Ovary (tissue), 10 donors: ENCODE measurements at regions of chr19 and their contacts with region 1.

Region 1: DNA sequence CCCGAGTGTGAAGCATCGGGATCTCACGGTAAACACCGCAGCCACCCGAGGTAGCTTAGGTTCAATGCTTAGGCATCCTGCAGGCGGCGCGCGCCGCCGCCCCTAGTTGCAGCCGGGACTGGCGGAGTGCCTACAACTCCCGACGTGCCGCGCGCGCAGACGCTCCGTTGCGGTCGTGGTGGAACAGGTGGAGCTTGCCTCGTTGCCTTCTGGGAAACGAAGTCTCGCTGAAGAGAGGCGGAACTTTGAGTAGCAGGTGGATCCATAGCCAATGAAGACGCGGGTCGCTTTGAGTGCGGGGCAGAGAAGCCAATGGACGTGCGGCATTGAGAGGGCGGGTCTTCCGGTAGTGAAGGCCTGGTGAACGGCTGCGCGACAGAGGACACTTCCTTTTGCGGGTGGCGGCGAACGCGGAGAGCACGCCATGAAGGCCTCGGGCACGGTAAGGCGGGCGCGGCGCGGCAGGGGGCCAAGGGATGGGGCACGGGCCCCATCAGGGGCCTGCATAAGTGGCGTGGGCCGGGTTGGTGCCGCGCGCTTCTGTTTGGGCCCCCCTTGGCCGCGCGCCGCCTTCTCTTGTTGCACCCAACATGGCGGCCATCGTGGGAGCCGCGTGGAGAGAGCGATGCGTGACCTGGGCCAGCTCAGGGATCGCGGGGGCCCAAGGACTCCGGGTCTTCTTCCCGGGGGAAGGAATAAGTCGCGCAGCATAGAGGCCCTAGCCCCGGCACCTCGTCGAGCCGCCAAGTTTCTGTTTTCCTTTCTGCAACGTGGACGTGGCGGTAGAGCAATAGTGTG is at the start of gene RPL18A:
- DNase-seq: peak; percentile 98 to 99 (median 98)
- H3K4me3 ChIP-seq: peak within 1 kb of the TSS; percentile 92
- H3K27ac ChIP-seq: peak within 1 kb of the TSS; percentile 79 to 86
- H3K4me1 ChIP-seq: peaks cover 5% of the 10 kb centered on the region
- H3K27me3 ChIP-seq: no peaks in the 10 kb centered on the region
- CTCF ChIP-seq: peak; percentile 63 to 88 (median 78)
- EP300 ChIP-seq: no peak
- POLR2A ChIP-seq: peak; percentile 91
- total RNA-seq, gene RPL18A: 2,762 to 5,071 (median 3,195) TPM

Region 2: DNA sequence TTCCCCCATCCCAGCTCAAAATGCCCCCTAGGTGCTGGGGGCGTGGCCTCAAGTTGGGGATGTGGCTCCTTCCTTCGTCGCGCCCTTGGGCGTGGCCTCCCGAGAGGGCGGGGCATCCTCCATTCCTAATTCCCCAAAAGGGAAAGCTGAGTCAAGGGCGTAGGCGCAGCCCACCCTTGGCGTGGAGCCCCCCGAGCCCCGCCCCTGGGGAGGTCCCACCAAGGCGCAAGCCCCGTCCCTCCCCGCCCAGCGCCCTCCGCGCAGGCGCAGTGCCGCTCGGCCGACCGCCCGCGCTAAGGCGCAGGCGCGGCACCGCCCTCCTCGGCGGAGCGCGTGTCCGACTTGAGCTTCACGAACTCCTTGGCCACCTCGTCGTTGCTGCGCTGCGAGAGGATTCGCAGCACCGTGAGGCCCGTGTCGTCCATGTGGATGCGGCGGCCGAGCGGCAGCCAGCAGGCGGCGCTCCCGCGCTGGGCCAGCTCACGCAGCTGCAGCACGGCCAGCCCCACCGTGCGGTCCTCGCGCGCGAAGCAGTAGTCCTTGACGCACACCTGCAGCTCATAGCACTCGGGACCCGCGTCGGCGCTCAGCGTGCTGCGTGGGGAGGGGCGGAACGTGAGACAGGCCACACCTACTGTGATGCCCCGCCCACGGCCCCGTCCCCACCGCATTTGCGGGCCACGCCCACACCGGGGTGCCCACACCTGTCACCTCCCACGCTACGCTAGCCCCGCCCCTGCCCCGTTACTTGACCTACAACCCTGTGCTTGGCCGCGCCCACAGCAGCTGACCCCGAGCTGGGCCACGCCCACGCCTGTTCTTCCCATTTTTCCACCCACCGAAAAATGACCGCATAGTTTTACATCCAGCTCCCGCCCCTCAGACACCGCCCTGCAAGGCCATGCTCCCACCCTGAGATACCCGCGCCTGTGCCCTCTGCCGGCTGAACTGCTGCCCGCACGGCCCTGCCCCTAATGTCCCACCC is 253.7 kb before region 1 on chr19:
- intact Hi-C with region 1: loop called in 1 of 4 experiments (anchors 10 kb)
- DNase-seq: peak; percentile 86 to 91 (median 87)
- H3K4me3 ChIP-seq: peak overlapping the region; percentile 1
- H3K27ac ChIP-seq: peak overlapping the region; percentile 21 to 60
- H3K4me1 ChIP-seq: peaks cover 7% of the 10 kb centered on the region
- H3K27me3 ChIP-seq: no peaks in the 10 kb centered on the region
- CTCF ChIP-seq: peak; percentile 62 to 98 (median 95)
- EP300 ChIP-seq: no peak
- POLR2A ChIP-seq: no peak

Region 3: GRCh38 chr19:17616961-17617806 is 242.5 kb before region 1 on chr19:
- intact Hi-C with region 1: no loop called
- DNase-seq: no peak
- H3K4me3 ChIP-seq: no peak overlapping the region
- H3K27ac ChIP-seq: no peak overlapping the region
- H3K4me1 ChIP-seq: peaks cover 2% of the 10 kb centered on the region
- H3K27me3 ChIP-seq: no peaks in the 10 kb centered on the region
- CTCF ChIP-seq: no peak
- EP300 ChIP-seq: no peak
- POLR2A ChIP-seq: no peak

Region 4: DNA sequence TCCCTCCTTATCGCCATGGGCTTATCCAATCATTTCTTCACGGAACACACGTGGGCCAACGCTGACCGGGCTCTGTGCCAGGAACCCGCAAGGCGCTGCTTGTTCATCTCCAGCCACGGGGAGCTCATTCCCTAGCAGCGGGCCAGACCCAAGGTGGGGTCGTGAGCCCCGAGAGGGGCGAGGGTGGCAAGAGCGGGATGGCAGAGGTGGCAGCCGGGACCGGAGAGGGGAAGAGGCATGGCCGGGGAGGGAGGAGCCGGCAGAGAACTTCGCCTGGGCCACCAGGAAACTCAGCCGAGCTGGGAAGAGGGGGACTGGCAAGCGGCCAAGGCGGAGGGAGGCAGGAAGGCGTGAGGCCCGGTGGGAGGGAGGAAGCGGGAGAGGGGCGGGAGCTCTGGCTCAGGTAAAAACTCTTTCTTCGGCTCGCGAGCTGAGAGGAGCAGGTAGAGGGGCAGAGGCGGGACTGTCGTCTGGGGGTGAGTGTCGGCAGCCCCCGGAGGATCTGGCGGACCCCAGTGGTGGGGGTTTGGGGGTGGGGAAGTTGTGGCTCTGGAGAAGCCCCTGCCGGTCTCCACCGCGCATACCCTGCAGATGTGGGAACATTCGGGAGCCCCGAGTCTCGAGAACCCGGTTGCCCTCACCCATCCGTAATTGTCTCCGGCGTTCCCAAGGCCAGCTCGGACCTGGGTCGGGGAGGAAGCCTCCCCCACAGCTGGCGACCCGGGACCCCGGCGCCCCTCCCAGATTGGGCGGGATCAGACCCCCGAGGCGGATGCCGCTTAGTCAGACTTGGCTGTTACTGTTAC is 64.8 kb before region 1 on chr19 and contains the start of gene B3GNT3:
- intact Hi-C with region 1: loop called in 1 of 4 experiments (anchors 10 kb)
- DNase-seq: peak in 2 of 5 donors; percentile 33 to 56
- H3K4me3 ChIP-seq: peak within 1 kb of the TSS; percentile 28
- H3K27ac ChIP-seq: no peak within 1 kb of the TSS
- H3K4me1 ChIP-seq: no peaks in the 10 kb centered on the region
- H3K27me3 ChIP-seq: no peaks in the 10 kb centered on the region
- CTCF ChIP-seq: no peak
- EP300 ChIP-seq: no peak
- POLR2A ChIP-seq: no peak
- total RNA-seq, gene B3GNT3: 0.34 to 0.79 (median 0.51) TPM in 5 of 7 donors, not detected in the others

Region 5: DNA sequence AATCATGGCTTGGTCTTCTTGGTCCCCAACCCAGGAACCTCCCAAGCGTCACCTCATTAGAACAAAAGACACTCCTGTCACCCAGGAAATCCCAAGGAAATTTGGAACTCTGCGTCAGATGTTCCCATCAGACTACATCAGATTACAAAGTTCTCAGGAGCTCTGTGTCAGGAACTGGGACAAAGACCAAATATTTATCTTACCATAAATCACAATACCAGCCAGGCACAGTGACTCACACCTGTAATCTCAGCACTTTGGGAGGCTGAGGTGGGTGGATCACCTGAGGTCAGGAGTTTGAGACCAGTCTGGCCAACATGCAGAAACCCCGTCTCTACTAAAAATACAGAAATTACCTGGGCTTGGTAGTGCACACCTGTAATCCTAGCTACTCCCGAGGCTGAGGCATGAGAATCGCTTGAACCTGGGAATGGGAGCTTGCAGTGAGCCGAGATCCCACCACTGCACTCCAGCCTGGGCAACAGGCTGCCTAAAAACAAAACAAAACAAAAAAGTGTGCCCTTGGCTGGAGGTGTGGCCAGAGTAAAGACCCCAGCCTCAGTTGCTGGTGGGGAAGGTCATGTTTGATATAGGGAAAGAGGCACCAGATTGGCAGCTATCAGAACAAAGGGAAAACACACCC is 56.3 kb after region 1 on chr19:
- intact Hi-C with region 1: no loop called
- DNase-seq: no peak
- H3K4me3 ChIP-seq: no peak overlapping the region
- H3K27ac ChIP-seq: no peak overlapping the region
- H3K4me1 ChIP-seq: no peaks in the 10 kb centered on the region
- H3K27me3 ChIP-seq: no peaks in the 10 kb centered on the region
- CTCF ChIP-seq: no peak
- EP300 ChIP-seq: no peak
- POLR2A ChIP-seq: no peak

Region 6: DNA sequence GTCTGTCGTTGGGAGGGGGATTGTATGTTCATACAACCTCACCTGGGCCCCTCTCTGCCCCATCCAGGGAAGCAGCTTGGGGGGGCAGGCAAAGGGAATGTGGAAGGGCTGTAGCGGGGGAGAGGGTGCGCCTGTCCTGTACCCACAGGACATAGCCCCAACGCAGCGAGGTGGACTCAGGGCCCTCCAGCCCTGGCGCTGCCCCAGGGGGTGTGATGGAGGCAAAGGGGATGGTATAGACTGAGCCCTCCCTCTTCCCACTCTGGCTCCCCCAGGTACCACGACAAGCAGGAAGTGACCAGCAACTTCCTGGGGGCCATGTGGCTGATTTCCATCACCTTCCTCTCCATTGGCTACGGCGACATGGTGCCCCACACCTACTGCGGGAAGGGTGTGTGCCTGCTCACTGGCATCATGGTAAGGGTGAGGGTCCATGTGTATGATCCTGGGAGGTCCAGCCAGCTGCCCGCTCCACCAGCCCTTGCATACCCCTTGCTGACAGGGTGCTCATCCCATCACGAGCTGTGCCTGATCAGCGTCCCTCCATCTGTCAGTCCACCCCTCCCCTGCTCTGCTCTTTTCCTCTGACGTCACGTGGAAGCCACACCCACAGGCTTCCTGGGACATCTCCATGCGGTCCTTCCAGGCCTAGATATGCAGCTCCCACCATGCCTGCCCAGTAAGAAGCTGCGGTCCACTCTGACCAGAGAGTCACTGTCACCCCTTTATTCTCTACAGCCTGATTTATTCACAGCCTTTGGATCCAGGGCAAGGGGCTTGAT is 125.5 kb after region 1 on chr19:
- intact Hi-C with region 1: loop called in 2 of 4 experiments (anchors 10 kb)
- DNase-seq: no peak
- H3K4me3 ChIP-seq: no peak overlapping the region
- H3K27ac ChIP-seq: no peak overlapping the region
- H3K4me1 ChIP-seq: no peaks in the 10 kb centered on the region
- H3K27me3 ChIP-seq: no peaks in the 10 kb centered on the region
- CTCF ChIP-seq: no peak
- EP300 ChIP-seq: no peak
- POLR2A ChIP-seq: no peak

Region 7: DNA sequence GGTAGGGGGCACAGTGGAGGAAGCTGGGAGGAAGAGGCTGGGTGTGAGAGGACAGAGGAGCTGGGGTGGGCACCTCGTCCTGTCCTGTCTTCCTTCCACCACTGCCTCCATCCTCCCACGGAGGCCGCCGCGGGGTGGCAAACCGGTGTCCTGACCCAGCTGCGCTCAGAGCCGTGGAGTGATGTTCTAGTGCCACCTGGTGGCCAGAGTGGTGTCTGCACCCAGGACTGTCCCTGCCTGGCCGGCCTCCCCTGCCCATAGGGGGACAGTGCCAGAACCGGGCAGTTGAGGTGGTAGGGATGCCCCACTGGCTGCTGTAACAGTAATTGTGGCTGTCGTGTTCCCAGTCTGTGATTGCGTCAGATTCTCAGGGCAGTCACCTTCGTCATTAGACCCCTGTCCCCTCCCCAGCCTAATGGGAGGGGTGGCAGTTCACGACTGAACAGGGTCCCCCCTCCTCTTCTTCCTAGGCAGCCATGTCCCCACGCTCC is 137.1 kb after region 1 on chr19:
- intact Hi-C with region 1: loop called in 1 of 4 experiments (anchors 10 kb)
- DNase-seq: peak; percentile 79 to 92 (median 89)
- H3K4me3 ChIP-seq: no peak overlapping the region
- H3K27ac ChIP-seq: no peak overlapping the region
- H3K4me1 ChIP-seq: peaks cover 2% of the 10 kb centered on the region
- H3K27me3 ChIP-seq: no peaks in the 10 kb centered on the region
- CTCF ChIP-seq: peak; percentile 84 to 99 (median 98)
- EP300 ChIP-seq: no peak
- POLR2A ChIP-seq: peak; percentile 30